ENCODE measurements at regions of chr2 and their contacts with region 1.

Region 1: GRCh38 chr2:120680136-120680761 is 55.4 kb upstream of the GLI2 start:
- DNase-seq: peak; percentile 89
- H3K4me3 ChIP-seq: no peak overlapping the region
- H3K27ac ChIP-seq: no peak overlapping the region
- H3K4me1 ChIP-seq: peaks cover 8% of the 10 kb centered on the region
- H3K27me3 ChIP-seq: no peaks in the 10 kb centered on the region
- CTCF ChIP-seq: peak; percentile 63 to 88 (median 78)
- POLR2A ChIP-seq: no peak

Region 2: DNA sequence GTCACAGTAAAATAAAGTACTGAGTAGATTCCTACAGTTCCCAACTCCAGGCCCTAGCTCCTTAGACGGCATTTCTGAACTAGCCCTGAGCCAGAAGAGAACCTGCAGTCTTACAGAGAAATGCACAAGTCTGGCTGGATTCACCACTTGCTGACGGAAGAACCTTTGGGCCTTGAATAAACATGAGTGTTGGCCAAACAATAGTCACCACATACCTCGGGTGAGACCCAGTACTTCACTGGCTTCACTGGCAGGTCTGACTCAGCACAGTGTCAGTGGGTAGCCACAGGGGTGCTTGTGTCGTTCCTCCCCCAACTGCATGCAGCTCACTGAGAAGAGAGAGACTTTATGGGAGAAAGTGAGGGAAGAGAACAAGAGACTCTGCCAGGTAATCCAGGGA is 546.0 kb before region 1 on chr2:
- intact Hi-C with region 1: no loop called
- DNase-seq: no peak
- H3K4me3 ChIP-seq: no peak overlapping the region
- H3K27ac ChIP-seq: no peak overlapping the region
- H3K4me1 ChIP-seq: no peaks in the 10 kb centered on the region
- H3K27me3 ChIP-seq: no peaks in the 10 kb centered on the region
- CTCF ChIP-seq: no peak
- POLR2A ChIP-seq: no peak

Region 3: GRCh38 chr2:120552800-120553481 is 127.3 kb before region 1 on chr2:
- intact Hi-C with region 1: loop called (anchors 5 kb)
- DNase-seq: peak; percentile 85
- H3K4me3 ChIP-seq: no peak overlapping the region
- H3K27ac ChIP-seq: no peak overlapping the region
- H3K4me1 ChIP-seq: no peaks in the 10 kb centered on the region
- H3K27me3 ChIP-seq: no peaks in the 10 kb centered on the region
- CTCF ChIP-seq: peak in 3 of 4 experiments; percentile 58 to 82 (median 79)
- POLR2A ChIP-seq: no peak

Region 4: GRCh38 chr2:120749506-120750431 is 69.5 kb after region 1 on chr2:
- intact Hi-C with region 1: no loop called
- DNase-seq: no peak
- H3K4me3 ChIP-seq: no peak overlapping the region
- H3K27ac ChIP-seq: no peak overlapping the region
- H3K4me1 ChIP-seq: no peaks in the 10 kb centered on the region
- H3K27me3 ChIP-seq: no peaks in the 10 kb centered on the region
- CTCF ChIP-seq: no peak
- POLR2A ChIP-seq: no peak

Region 5: GRCh38 chr2:120949027-120949956 is 269.0 kb after region 1 on chr2:
- intact Hi-C with region 1: no loop called
- DNase-seq: no peak
- H3K4me3 ChIP-seq: no peak overlapping the region
- H3K27ac ChIP-seq: no peak overlapping the region
- H3K4me1 ChIP-seq: no peaks in the 10 kb centered on the region
- H3K27me3 ChIP-seq: no peaks in the 10 kb centered on the region
- CTCF ChIP-seq: no peak
- POLR2A ChIP-seq: no peak